Common myeloid progenitor, CD34-positive (primary cell): ENCODE measurements at regions of chr1 and their contacts with region 1.

Region 1: DNA sequence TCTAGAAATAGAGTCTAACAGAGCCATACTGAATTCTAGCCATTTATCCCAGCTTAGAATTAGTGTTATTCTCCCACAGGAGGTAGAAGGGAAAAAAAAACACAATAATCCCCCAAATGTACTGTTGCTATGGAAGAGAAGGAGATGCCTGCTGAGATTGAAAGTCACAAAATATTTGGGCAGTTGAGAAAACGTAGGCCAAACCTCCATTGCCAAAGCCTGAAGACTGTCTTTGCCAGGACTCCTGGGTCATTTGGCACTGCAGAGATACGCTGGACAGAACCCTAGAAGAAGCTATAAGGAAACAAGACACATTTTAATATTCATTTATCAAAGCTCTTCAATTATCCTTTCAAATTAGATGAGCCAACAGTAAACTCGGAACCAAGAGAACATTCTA is 22.3 kb downstream of the BARHL2 start:
- DNase-seq: no peak
- H3K4me3 ChIP-seq: no peak overlapping the region
- H3K27ac ChIP-seq: no peak overlapping the region
- H3K4me1 ChIP-seq: no peaks in the 10 kb centered on the region
- H3K27me3 ChIP-seq: peaks cover 9 to 54% (median 26%) of the 10 kb centered on the region in 5 experiments

Region 2: GRCh38 chr1:90729504-90730242 is 34.8 kb after region 1 on chr1:
- CTCF ChIA-PET with region 1: no interaction called
- POLR2A ChIA-PET with region 1: interaction called, 13 read pairs
- DNase-seq: peak in 1 of 3 donors; percentile 34
- H3K4me3 ChIP-seq: peak overlapping the region in 1 of 7 experiments; percentile 34
- H3K27ac ChIP-seq: no peak overlapping the region
- H3K4me1 ChIP-seq: peaks cover 4 to 39% (median 27%) of the 10 kb centered on the region in 4 experiments
- H3K27me3 ChIP-seq: peaks cover 46 to 100% (median 76%) of the 10 kb centered on the region in 5 experiments

Region 3: GRCh38 chr1:90761156-90761555 is 66.3 kb after region 1 on chr1:
- CTCF ChIA-PET with region 1: no interaction called
- POLR2A ChIA-PET with region 1: no interaction called
- DNase-seq: no peak
- H3K4me3 ChIP-seq: no peak overlapping the region
- H3K27ac ChIP-seq: no peak overlapping the region
- H3K4me1 ChIP-seq: no peaks in the 10 kb centered on the region
- H3K27me3 ChIP-seq: peaks cover 0 to 49% (median 15%) of the 10 kb centered on the region in 5 experiments

Region 4: DNA sequence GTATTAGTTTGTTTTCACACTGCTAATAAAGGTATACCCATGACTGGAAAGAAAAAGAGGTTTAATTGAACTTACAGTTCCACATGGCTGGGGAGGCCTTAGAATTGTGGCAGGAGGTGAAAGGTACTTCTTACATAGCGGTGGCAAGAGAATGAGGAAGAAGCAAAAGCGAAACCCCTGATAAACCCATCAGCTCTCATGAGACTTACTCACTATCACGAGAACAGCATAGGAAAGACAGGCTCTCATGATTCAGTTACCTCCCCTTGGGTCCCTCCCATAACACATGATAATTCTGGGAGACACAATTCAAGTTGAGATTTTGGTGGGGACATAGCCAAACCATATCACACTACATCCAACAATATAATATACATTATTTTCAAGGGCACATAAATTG is 167.9 kb after region 1 on chr1:
- CTCF ChIA-PET with region 1: no interaction called
- POLR2A ChIA-PET with region 1: no interaction called
- DNase-seq: no peak
- H3K4me3 ChIP-seq: no peak overlapping the region
- H3K27ac ChIP-seq: no peak overlapping the region
- H3K4me1 ChIP-seq: no peaks in the 10 kb centered on the region
- H3K27me3 ChIP-seq: no peaks in the 10 kb centered on the region

Region 5: DNA sequence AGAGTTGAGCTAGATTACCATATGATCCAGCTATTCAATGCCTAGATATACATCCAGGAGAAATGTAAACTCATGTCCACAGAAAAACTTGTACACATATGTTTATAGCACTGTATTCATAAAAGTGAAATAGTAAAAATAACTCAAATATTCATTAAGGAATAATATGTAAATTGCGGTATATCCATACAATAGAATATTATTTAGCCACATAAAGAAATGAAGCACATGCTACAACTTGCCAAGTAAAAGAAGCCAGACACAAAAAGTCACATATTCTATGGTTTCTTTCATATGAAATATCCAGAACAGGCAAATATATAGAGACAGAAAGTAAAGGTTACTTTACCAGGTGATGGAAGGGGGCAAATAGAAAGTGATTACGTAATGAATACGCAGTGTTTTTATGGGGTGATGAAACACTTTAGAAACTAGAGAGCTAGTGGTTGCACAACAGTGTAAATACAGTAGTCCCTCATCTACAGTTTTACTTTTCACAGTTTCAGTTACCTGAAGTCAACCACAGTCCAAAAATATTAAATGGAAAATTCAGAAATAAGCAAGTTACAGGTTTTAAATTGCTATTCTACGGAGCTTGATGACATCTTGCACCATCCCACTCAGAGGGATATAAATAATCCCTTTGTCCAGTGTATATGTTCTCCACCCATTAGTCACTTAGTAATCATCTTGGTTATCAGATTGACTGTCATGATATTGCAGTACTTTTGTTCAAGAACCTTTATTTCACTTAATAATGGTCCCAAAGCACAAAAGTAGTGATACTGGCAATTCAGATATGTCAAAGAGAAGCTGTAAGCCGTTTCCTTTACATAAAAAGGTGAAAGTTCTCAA is 264.7 kb after region 1 on chr1:
- CTCF ChIA-PET with region 1: no interaction called
- POLR2A ChIA-PET with region 1: no interaction called
- DNase-seq: no peak
- H3K4me3 ChIP-seq: no peak overlapping the region
- H3K27ac ChIP-seq: no peak overlapping the region
- H3K4me1 ChIP-seq: no peaks in the 10 kb centered on the region
- H3K27me3 ChIP-seq: no peaks in the 10 kb centered on the region